ENCODE measurements at regions of chr3 and their contacts with region 1.

Region 1: DNA sequence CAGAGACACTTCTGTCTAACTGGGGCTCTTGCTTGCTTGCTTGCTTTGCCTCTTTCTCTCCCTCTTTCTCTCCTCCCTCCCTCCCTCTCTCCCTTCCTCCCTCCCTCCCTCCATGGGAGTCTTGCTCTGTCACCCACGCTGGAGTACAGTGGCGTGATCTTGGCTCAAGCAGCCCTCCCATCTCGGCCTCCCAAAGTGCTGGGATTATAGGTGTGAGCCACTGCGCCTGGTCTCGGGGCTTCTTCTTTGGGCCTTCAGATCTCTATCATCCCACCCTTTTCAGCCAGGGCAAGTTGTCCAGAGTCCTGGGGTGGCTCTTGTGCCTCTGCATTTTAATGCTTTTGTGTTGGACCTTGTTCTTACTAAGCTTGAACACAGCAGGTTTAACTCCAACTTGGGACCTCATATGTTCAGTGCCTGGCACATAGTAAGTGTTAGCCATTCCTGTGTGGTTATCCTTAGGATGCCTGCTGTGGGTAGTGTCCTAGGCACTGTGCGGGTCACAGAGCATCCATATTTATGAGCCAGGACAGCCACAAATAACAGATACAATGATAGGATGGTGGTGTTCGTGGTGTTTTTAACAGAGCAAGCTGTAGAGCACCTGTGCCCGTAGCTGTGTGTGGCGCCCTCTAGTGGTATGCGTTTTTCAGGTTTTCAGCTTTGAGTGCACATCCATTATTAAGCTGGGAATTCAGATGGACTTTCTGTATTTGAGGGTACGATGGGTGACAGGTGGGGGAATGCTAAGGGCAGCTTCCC is 75.1 kb downstream of the CCK start:
- DNase-seq: no peak
- H3K4me3 ChIP-seq: no peak overlapping the region
- H3K27ac ChIP-seq: no peak overlapping the region
- H3K27me3 ChIP-seq: no peaks in the 10 kb centered on the region
- CTCF ChIP-seq: peak; percentile 89

Region 2: GRCh38 chr3:41900265-41900664 is 290.6 kb before region 1 on chr3:
- CTCF ChIA-PET with region 1: interaction called, 40 read pairs
- POLR2A ChIA-PET with region 1: no interaction called
- DNase-seq: no peak
- H3K4me3 ChIP-seq: no peak overlapping the region
- H3K27ac ChIP-seq: no peak overlapping the region
- H3K27me3 ChIP-seq: no peaks in the 10 kb centered on the region
- CTCF ChIP-seq: no peak

Region 3: DNA sequence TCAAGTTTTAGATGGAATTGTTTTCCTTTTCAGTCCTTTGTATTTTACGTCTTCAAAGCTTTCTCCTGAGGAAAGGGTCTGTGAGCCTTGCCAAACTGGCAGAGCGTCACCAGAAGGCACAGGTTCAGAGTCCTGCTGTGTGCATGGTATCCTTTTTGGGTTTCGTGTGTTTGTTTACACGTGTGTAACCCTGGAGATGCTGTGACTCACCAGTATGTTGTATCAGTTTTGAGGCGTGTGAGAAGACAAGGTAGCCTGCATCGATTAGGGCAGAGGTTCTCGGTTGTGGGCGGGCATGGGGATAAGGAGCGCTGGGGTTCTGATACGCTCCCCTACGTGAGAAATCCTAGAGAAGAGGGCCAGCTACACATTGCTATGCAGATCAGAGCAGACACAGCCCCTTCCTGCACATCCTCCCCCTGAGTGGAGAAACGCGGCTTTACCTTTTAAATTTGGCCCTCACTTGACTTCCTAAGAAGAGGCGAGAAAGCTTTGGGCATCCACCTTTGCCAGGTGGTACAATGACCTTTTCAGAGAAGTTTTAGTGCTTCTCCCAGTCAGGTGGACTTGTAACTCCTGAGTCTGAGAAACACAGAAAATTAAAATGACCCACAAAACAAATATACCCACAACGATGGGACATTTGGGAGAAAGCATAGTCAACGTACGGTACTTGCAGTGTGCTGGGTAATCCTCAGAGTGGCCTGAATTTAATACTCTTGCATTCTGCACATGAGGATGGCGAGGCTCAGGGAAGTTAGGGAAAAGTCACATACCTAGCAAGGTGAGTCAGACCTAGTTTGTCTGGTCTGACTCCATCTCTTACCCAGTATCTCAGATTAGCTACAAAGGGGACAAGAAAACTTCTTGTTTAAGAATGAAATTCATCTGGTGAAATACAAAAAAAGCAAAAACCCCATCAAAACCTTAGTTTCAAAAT is 61.6 kb before region 1 on chr3:
- CTCF ChIA-PET with region 1: interaction called, 11 read pairs
- POLR2A ChIA-PET with region 1: no interaction called
- DNase-seq: no peak
- H3K4me3 ChIP-seq: no peak overlapping the region
- H3K27ac ChIP-seq: no peak overlapping the region
- H3K27me3 ChIP-seq: no peaks in the 10 kb centered on the region
- CTCF ChIP-seq: no peak

Region 4: DNA sequence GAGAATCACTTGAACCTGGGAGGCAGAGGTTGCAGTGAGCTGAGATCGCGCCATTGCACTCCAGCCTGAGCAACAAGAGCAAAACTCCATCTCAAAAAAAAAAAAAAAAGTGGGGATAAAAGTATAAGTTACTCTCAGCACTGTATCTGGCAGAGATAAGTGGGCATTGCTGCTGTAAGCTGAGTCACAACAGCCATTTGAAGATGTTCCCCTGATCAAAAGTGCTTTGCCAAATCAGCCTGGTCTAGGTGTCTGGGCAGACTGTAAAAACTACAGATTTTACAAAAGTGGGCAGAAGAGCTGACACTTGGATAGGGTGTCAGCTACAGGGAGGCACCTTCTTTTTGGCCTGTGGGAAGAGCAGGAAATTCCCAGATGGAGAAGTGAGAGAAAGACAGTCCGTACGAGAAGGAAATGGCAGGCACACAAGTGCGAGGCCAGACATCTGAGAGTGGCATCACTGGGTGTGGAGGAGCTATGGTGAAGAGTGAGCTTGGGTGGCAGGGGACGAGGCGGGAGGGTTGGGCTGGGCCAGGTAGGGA is 21.2 kb before region 1 on chr3:
- CTCF ChIA-PET with region 1: interaction called, 28 read pairs
- POLR2A ChIA-PET with region 1: no interaction called
- DNase-seq: no peak
- H3K4me3 ChIP-seq: no peak overlapping the region
- H3K27ac ChIP-seq: no peak overlapping the region
- H3K27me3 ChIP-seq: no peaks in the 10 kb centered on the region
- CTCF ChIP-seq: no peak

Region 5: GRCh38 chr3:42205800-42206514 is 15.1 kb after region 1 on chr3:
- CTCF ChIA-PET with region 1: interaction called, 36 read pairs
- POLR2A ChIA-PET with region 1: no interaction called
- DNase-seq: no peak
- H3K4me3 ChIP-seq: no peak overlapping the region
- H3K27ac ChIP-seq: no peak overlapping the region
- H3K27me3 ChIP-seq: no peaks in the 10 kb centered on the region
- CTCF ChIP-seq: no peak

Region 6: DNA sequence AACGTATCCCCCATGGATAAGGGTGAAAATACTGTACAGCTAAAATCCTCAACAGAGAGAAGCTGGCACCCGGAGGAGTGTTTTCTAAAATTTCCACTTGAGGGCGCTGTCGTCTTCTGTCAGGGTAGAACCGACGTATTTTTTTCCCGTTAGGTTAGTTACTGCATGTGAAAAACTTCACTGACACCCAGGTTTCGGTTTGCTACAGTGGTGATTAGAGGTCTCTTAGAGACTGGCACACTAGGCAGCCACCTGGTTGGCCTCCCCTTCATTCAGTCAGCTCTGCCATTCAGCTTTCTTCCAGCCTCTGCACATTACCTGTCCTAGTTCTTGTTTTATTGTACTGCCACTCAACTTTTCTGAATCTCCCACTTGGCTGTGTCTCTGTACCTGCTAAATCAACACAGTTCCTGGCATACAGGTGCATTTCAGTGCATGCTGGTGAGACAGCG is 56.7 kb after region 1 on chr3:
- CTCF ChIA-PET with region 1: interaction called, 11 read pairs
- POLR2A ChIA-PET with region 1: no interaction called
- DNase-seq: no peak
- H3K4me3 ChIP-seq: peak overlapping the region; percentile 18
- H3K27ac ChIP-seq: no peak overlapping the region
- H3K27me3 ChIP-seq: peaks cover 24% of the 10 kb centered on the region
- CTCF ChIP-seq: peak; percentile 70

Measured in AG04450 (cell line).